ENCODE measurements at regions of chr4 and their contacts with region 1.

Region 1: DNA sequence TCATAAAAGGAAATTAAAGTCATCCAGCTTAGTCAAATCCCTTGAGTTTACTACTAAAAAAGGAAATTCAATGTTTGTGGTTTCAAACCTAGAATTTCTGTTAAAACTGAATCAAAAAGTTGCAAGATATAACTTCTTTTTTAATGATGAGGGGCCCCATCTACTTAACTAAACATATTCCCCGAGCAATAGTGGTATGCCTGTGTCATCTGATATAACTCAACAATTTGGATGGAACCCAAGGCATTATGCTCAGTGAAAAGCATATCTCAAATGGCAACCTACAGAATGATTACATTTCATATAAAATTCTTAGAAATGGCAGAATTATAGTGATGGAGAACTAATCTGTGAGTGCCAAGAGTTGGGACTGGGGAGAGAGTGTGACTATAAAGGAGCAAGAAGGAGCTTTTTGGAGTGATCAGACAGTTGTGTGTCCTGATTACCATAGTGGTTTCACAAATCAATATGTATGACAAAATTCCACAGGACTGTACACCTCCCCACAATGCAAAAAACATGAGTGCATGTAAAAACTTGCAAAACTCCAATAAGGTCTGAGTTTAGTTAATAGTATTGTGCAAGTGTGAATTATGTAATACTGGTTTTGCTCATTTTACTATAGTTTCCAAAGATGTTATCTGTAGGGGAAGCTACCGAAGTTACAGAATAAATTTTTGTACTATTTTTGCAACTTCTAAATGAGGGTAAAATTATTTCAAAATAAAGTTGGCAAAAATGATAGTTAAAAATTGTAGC is 323.2 kb downstream of the ARHGAP24 start:
- H3K4me3 ChIP-seq: no peak overlapping the region
- H3K27ac ChIP-seq: no peak overlapping the region
- H3K4me1 ChIP-seq: no peaks in the 10 kb centered on the region
- CTCF ChIP-seq: no peak

Region 2: GRCh38 chr4:85778632-85779131 is 19.5 kb before region 1 on chr4:
- CTCF ChIA-PET with region 1: interaction called, 14 read pairs
- POLR2A ChIA-PET with region 1: no interaction called
- H3K4me3 ChIP-seq: no peak overlapping the region
- H3K27ac ChIP-seq: no peak overlapping the region
- H3K4me1 ChIP-seq: no peaks in the 10 kb centered on the region
- CTCF ChIP-seq: no peak

Region 3: DNA sequence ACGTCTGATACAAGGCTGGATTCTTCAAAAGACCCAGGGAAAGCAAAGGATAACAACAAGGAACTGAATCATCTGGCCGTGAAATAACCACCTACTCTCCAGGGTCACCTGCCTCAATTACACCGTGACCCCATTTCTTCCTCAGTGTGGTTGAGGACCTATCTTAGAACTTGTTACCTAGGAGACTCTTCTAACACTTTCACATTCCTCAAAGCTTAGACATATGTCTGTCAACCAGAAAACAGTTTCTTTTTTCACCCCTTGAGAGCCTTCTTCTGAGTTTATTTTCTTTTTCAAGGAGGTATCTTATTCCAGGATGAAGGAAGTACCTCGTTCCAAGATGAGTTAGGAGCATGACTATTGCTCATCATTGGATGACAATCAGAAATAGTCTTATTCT is 14.6 kb after region 1 on chr4:
- CTCF ChIA-PET with region 1: interaction called, 27 read pairs
- POLR2A ChIA-PET with region 1: no interaction called
- H3K4me3 ChIP-seq: no peak overlapping the region
- H3K27ac ChIP-seq: no peak overlapping the region
- H3K4me1 ChIP-seq: no peaks in the 10 kb centered on the region
- CTCF ChIP-seq: no peak

Region 4: DNA sequence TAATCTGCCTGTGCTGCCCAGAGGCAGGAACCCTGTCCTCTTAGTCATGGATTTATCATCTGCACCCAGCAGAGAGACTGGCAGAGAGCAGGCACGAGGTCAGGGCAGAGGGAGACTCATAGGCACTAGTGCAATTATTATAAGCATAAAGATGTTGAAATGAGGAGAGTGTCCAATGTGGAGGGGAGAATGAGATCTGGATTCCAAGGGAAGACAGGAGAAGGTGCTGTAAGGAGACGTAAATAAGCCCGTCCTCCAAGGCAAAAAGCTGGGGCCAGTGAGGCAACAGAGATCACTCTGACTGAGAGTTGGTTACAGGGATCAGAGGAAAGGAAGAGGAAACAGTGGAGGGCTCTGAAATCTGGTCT is 155.4 kb after region 1 on chr4:
- CTCF ChIA-PET with region 1: interaction called, 10 read pairs
- POLR2A ChIA-PET with region 1: no interaction called
- H3K4me3 ChIP-seq: no peak overlapping the region
- H3K27ac ChIP-seq: no peak overlapping the region
- H3K4me1 ChIP-seq: no peaks in the 10 kb centered on the region
- CTCF ChIP-seq: no peak

Region 5: DNA sequence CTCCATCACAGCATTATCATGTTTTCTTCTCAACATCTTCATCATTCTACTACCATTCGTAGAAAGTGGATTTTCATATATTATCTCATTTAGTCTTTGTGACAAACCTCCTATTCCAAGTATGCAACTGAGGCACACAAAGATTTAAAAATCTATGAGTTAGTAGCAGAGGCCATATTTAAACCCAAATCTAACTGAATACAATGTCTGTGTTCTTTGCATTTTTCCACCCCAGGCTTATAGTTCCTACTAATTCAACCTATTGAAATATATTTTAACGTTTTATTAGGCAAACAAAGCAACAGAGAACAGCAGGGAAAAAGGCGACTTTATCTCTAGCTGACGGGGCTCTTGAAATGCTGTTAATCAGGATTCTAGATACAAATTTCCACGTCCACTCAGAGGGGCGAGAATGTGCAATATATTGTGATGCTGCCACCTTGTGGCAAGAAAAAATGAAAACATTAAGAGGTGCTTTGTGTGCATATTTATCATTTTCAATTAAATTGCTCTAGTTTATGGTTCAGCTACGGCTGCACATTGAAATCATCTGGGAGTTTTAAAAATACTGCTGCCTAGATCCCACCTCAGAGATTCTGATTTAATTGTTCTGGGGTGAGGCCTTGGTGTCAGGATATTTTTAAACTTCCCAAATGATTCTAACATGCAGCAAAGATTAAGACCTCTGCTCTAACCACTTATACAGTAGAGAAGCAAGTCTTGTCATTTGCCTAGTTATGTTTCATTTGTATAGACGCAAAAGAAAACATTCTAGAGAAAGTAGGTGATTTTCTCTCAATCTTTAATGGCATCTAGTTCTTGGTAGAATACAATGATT is 245.8 kb after region 1 on chr4:
- CTCF ChIA-PET with region 1: interaction called, 20 read pairs
- POLR2A ChIA-PET with region 1: no interaction called
- H3K4me3 ChIP-seq: no peak overlapping the region
- H3K27ac ChIP-seq: no peak overlapping the region
- H3K4me1 ChIP-seq: no peaks in the 10 kb centered on the region
- CTCF ChIP-seq: no peak

Measured in HEK293 (cell line).